GM12878 (cell line): ENCODE measurements at regions of chr3 and their contacts with region 1.

Region 1: GRCh38 chr3:53845103-53845880 is 927 bp downstream of the CHDH start:
- DNase-seq: no peak
- ATAC-seq: peak; percentile 10
- H3K4me3 ChIP-seq: peak overlapping the region; percentile 73
- H3K27ac ChIP-seq: peak overlapping the region; percentile 62
- H3K4me1 ChIP-seq: peaks cover 39% of the 10 kb centered on the region
- H3K27me3 ChIP-seq: no peaks in the 10 kb centered on the region
- CTCF ChIP-seq: peak; percentile 29 to 33 (median 30); a peak in 2 of 6 replicates
- EP300 ChIP-seq: no peak
- POLR2A ChIP-seq: no peak
- RAD21 ChIP-seq: no peak

Region 2: DNA sequence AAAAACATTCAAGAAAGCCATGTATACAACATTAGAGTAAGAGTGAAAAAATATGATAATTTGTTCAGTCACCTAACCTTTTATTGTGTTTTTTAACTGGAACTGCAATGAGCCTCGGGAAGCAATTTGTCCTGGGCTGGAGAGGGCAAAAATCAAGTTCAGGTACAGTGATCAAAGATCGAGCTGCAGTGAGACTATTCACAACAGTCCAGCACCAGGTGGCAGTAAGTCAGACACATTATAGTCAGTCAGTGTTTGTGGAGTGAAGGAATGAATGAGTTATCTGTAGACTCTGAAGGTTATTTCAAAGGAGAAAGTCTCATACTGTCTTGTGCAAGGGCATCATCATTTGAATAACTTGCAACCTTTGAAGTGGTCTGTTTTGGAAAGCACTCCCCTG is 115.7 kb before region 1 on chr3:
- CTCF ChIA-PET with region 1: interaction called, 9 read pairs
- POLR2A ChIA-PET with region 1: interaction called, 4 read pairs
- RAD21 ChIA-PET with region 1: interaction called, 3 read pairs
- SMC1A ChIA-PET with region 1: interaction called, 13 read pairs
- in situ Hi-C with region 1: no loop called
- intact Hi-C with region 1: no loop called
- DNase-seq: no peak
- ATAC-seq: peak; percentile 91
- H3K4me3 ChIP-seq: no peak overlapping the region
- H3K27ac ChIP-seq: no peak overlapping the region
- H3K4me1 ChIP-seq: peaks cover 10% of the 10 kb centered on the region
- H3K27me3 ChIP-seq: no peaks in the 10 kb centered on the region
- CTCF ChIP-seq: peak; percentile 31 to 52 (median 34); a peak in 5 of 6 replicates
- EP300 ChIP-seq: no peak
- POLR2A ChIP-seq: no peak
- RAD21 ChIP-seq: peak; percentile 43

Region 3: DNA sequence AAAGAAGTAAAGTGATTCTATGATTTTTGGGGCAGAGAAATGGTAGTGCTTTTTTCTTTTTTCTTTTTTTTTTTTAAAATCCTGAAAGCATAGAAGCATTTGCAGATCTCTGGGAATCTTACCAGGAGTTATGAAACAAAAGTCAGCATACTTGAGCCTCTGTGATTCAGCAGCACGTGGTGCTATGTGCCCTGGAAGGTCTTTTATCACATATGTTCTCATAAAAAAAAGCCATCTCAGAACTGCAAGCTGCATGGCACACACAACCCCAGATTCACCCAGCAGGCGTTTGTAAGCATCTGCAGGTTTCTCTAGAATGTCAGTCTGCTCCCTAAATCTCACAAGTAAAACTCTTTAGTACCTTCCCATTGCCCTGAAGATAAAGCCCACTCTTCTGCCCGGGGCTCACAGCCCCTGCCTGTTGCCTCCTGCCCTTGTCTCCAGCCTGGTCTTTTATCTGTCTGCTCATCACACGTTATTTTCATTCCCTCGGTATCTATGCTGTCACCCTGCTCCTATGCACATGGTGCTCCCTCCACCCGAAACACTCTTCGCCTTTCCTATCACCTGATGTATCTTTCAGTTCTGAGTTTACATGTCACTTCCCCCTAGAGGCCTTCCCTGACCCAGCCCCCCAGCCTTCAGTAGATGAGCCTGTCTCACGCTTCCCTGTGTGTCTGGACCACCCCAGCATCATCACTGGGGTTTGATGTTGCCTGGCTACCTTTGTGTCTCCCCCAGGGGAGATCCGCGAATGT is 71.5 kb before region 1 on chr3:
- CTCF ChIA-PET with region 1: interaction called, 3 read pairs
- POLR2A ChIA-PET with region 1: interaction called, 30 read pairs
- RAD21 ChIA-PET with region 1: interaction called, 41 read pairs
- SMC1A ChIA-PET with region 1: interaction called, 21 read pairs
- in situ Hi-C with region 1: no loop called
- intact Hi-C with region 1: loop called (anchors 2 kb)
- DNase-seq: peak; percentile 82
- ATAC-seq: peak; percentile 93
- H3K4me3 ChIP-seq: no peak overlapping the region
- H3K27ac ChIP-seq: peak overlapping the region; percentile 65
- H3K4me1 ChIP-seq: peaks cover 27% of the 10 kb centered on the region
- H3K27me3 ChIP-seq: no peaks in the 10 kb centered on the region
- CTCF ChIP-seq: 0 out of 6 replicates have a peak, but pooled peaks of 1 of the 3 experiments have one; percentile 7
- EP300 ChIP-seq: peak; percentile 58 to 66; a peak in 3 of 4 replicates
- POLR2A ChIP-seq: peak; percentile 46; the same call in 1 of the 2 replicates
- RAD21 ChIP-seq: no peak

Region 4: GRCh38 chr3:53858096-53858741 is 12.9 kb after region 1 on chr3:
- CTCF ChIA-PET with region 1: interaction called, 7 read pairs
- POLR2A ChIA-PET with region 1: interaction called, 4 read pairs
- RAD21 ChIA-PET with region 1: interaction called, 6 read pairs
- SMC1A ChIA-PET with region 1: interaction called, 11 read pairs
- in situ Hi-C with region 1: no loop called
- intact Hi-C with region 1: no loop called
- DNase-seq: no peak
- ATAC-seq: no peak; the same call in 2 of the 3 replicates
- H3K4me3 ChIP-seq: no peak overlapping the region
- H3K27ac ChIP-seq: no peak overlapping the region
- H3K4me1 ChIP-seq: peaks cover 14% of the 10 kb centered on the region
- H3K27me3 ChIP-seq: no peaks in the 10 kb centered on the region
- CTCF ChIP-seq: no peak
- EP300 ChIP-seq: no peak
- POLR2A ChIP-seq: no peak
- RAD21 ChIP-seq: no peak

Region 5: DNA sequence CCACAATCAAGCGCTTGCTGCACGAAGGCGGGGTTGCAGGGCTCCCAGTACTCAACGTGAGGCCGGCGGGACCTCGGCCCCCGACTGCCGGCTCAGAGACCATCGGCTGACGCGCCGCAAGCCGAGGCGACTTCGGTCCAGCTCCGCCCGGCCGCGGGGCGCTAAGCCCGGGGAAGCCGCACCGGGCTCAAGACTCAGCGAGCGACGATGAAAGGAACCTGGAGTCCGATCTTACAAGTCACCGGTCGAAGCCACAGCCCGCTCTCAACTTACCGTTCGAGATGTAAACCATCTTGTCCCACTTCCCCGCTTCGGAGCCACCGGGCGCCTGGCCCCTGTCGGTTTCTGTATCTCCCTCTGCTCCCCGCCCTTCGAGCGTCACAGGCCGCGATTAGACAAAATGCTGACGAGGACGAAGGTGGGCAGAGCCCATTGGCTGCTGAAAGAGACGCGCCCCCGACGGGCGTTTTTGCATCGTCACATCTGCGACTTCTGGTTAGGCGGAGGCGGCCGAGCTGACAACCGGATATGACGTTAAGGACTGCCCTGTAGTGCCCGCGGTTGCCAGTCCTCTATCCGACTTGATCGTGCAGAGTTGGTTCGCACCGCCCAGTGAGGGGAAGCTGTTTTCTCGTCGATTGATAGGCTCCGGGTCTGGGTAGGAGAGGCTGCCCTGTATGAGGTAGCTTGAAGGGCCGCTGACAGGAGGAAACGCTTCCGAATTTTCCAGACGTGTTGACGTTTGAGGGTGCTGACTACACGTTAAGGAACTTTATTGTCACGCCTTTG is 46.4 kb after region 1 on chr3 and contains the start of gene SELENOK:
- CTCF ChIA-PET with region 1: interaction called, 6 read pairs
- POLR2A ChIA-PET with region 1: interaction called, 10 read pairs
- RAD21 ChIA-PET with region 1: interaction called, 11 read pairs
- SMC1A ChIA-PET with region 1: interaction called, 26 read pairs
- in situ Hi-C with region 1: no loop called
- intact Hi-C with region 1: no loop called
- DNase-seq: peak; percentile 96
- ATAC-seq: peak; percentile 96
- H3K4me3 ChIP-seq: peak within 1 kb of the TSS; percentile 89
- H3K27ac ChIP-seq: peak within 1 kb of the TSS; percentile 95
- H3K4me1 ChIP-seq: peaks cover 22% of the 10 kb centered on the region
- H3K27me3 ChIP-seq: no peaks in the 10 kb centered on the region
- CTCF ChIP-seq: no peak
- EP300 ChIP-seq: no peak; a peak in 1 of 4 replicates
- POLR2A ChIP-seq: peak; percentile 94
- RAD21 ChIP-seq: no peak
- polyA plus RNA-seq, gene SELENOK: 245 to 322 TPM

Region 6: GRCh38 chr3:53957831-53958230 is 112.5 kb after region 1 on chr3:
- CTCF ChIA-PET with region 1: no interaction called
- POLR2A ChIA-PET with region 1: no interaction called
- RAD21 ChIA-PET with region 1: no interaction called
- SMC1A ChIA-PET with region 1: no interaction called
- in situ Hi-C with region 1: no loop called
- intact Hi-C with region 1: no loop called
- DNase-seq: no peak
- ATAC-seq: no peak
- H3K4me3 ChIP-seq: no peak overlapping the region
- H3K27ac ChIP-seq: no peak overlapping the region
- H3K4me1 ChIP-seq: no peaks in the 10 kb centered on the region
- H3K27me3 ChIP-seq: no peaks in the 10 kb centered on the region; a peak in 1 of 4 replicates
- CTCF ChIP-seq: no peak
- EP300 ChIP-seq: no peak
- POLR2A ChIP-seq: no peak
- RAD21 ChIP-seq: no peak